ENCODE measurements at regions of chr17 and their contacts with region 1.

Region 1: GRCh38 chr17:44218344-44219107 is 949 bp downstream of the UBTF start:
- DNase-seq: peak; percentile 82 to 93 (median 92)
- ATAC-seq: peak; percentile 80
- H3K4me3 ChIP-seq: peak overlapping the region; percentile 68
- H3K4me3 Mint-ChIP-seq: peak overlapping the region; percentile 76 to 94 (median 86)
- H3K27ac ChIP-seq: peak overlapping the region; percentile 90
- H3K27ac Mint-ChIP-seq: peak overlapping the region; percentile 84 to 99 (median 97)
- H3K4me1 ChIP-seq: peaks cover 38 to 42% of the 10 kb centered on the region in 2 donors
- H3K4me1 Mint-ChIP-seq: peaks cover 48 to 53% (median 52%) of the 10 kb centered on the region in 7 donors
- H3K27me3 ChIP-seq: no peaks in the 10 kb centered on the region
- H3K27me3 Mint-ChIP-seq: no peaks in the 10 kb centered on the region

Region 2: DNA sequence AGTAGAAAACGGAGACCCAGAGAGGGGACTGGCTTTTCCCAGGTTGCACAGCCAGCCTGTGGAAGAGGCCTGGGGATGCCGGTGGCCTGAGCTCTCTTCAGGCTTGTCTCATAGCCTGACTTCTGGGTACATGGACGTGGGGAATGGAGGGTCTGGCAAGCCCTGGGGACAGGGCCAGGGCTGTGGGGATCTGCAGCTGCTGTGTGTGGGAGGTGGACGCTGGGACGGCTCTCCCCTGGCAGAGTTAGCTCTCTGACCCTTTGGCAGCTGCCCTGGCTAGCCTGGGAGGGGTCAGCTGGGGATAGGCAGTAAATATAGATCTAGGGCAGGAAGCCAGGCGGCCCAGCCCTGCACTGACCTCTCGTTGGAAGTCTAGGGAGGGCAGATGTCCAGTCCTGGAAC is 28.9 kb after region 1 on chr17:
- CTCF ChIA-PET with region 1: interaction called, 3 read pairs
- POLR2A ChIA-PET with region 1: interaction called, 25 read pairs
- intact Hi-C with region 1: loop called in 1 of 2 experiments (anchors 2 kb)
- DNase-seq: no peak
- ATAC-seq: no peak
- H3K4me3 ChIP-seq: no peak overlapping the region
- H3K4me3 Mint-ChIP-seq: peak overlapping the region in 3 of 10 donors; percentile 46 to 75 (median 59)
- H3K27ac ChIP-seq: no peak overlapping the region
- H3K27ac Mint-ChIP-seq: peak overlapping the region in 7 of 9 donors; percentile 16 to 87 (median 74)
- H3K4me1 ChIP-seq: peaks cover 24 to 39% of the 10 kb centered on the region in 2 donors
- H3K4me1 Mint-ChIP-seq: peaks cover 26 to 59% (median 49%) of the 10 kb centered on the region in 7 donors
- H3K27me3 ChIP-seq: no peaks in the 10 kb centered on the region
- H3K27me3 Mint-ChIP-seq: peaks cover 0 to 2% (median 0%) of the 10 kb centered on the region in 5 donors

Region 3: DNA sequence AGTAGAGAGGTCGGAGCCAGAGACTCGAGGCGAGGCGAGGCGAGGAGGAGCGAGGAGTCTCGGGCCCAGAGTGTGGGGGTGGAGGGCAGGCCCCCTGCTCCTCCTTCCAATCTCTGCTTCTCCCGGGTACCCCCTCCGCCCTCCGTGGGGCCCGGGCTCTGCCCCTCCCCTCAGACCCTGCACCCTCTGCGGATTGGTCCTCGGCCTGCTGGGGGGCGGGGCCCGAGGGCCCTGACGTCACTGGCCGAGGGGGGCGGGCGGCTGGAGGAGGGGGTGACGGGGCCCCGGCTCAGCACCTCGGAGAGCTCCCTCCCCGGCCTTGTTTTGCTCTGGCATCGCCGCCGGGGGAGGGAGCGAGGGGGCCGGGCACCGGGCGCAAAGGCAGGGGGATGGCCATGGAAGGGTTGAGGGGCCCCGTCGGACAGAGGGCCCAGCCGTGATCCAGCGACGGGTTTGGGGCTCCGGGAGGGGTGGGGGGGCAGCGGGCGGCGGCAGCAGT is 89.8 kb after region 1 on chr17 and contains the start of gene RUNDC3A:
- CTCF ChIA-PET with region 1: no interaction called
- POLR2A ChIA-PET with region 1: interaction called, 23 read pairs
- intact Hi-C with region 1: loop called in 1 of 2 experiments (anchors 1 kb)
- DNase-seq: peak; percentile 75 to 90 (median 85)
- ATAC-seq: peak; percentile 99
- H3K4me3 ChIP-seq: no peak within 1 kb of the TSS
- H3K4me3 Mint-ChIP-seq: peak within 1 kb of the TSS; percentile 42 to 84 (median 63)
- H3K27ac ChIP-seq: no peak within 1 kb of the TSS
- H3K27ac Mint-ChIP-seq: peak within 1 kb of the TSS in 3 of 9 donors; percentile 13 to 75 (median 71)
- H3K4me1 ChIP-seq: peaks cover 0 to 5% of the 10 kb centered on the region in 2 donors
- H3K4me1 Mint-ChIP-seq: peaks cover 14 to 27% (median 15%) of the 10 kb centered on the region in 7 donors
- H3K27me3 ChIP-seq: no peaks in the 10 kb centered on the region
- H3K27me3 Mint-ChIP-seq: peaks cover 28 to 57% (median 32%) of the 10 kb centered on the region in 5 donors
- total RNA-seq, gene RUNDC3A: 0.08 to 0.22 TPM in 2 of 5 experiments, not detected in the others

Region 4: GRCh38 chr17:44331249-44331760 is 112.8 kb after region 1 on chr17:
- CTCF ChIA-PET with region 1: interaction called, 9 read pairs
- POLR2A ChIA-PET with region 1: interaction called, 102 read pairs
- intact Hi-C with region 1: loop called in 1 of 2 experiments (anchors 1 kb)
- DNase-seq: peak in 8 of 9 donors; percentile 62 to 79 (median 71)
- ATAC-seq: peak; percentile 46
- H3K4me3 ChIP-seq: no peak overlapping the region
- H3K4me3 Mint-ChIP-seq: peak overlapping the region in 1 of 10 donors; percentile 24
- H3K27ac ChIP-seq: no peak overlapping the region
- H3K27ac Mint-ChIP-seq: peak overlapping the region in 3 of 9 donors; percentile 19 to 67 (median 43)
- H3K4me1 ChIP-seq: peaks cover 4 to 10% of the 10 kb centered on the region in 2 donors
- H3K4me1 Mint-ChIP-seq: peaks cover 0 to 18% (median 14%) of the 10 kb centered on the region in 7 donors
- H3K27me3 ChIP-seq: no peaks in the 10 kb centered on the region
- H3K27me3 Mint-ChIP-seq: peaks cover 0 to 2% (median 0%) of the 10 kb centered on the region in 5 donors

Measured in naive thymus-derived CD4-positive, alpha-beta T cell (primary cell).